GM12878 (cell line): ENCODE measurements at regions of chr14 and their contacts with region 1.

Region 1: DNA sequence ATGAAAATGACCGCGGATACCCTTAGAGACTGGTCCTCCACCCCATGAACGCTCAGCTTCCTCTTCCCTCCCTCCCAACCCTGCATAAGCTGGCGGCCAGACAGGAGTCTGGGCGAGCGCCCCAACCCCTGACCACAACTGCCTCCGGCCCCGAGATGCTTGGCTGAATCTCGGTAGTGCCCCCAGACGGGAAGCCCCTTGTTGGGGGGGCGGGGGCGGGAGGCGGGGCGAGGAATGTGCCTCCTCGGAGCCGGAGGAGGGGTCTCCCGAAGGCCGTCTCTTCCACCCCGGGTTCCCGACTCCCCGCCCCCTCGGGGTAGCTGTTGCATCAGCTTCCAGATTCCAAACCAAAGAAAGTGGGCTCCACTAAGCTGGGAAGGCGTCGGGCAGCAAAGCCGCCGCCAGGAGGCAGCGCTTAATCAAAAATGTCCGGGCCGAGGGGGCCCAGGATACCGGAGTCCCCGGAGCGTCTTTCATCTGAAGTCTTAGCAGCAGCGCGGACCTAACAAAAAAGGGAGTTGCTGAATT is 7.1 kb upstream of the MRPL52 start:
- DNase-seq: no peak
- ATAC-seq: peak; percentile 78
- H3K4me3 ChIP-seq: peak overlapping the region; percentile 74
- H3K27ac ChIP-seq: peak overlapping the region; percentile 48
- H3K4me1 ChIP-seq: peaks cover 34% of the 10 kb centered on the region
- H3K27me3 ChIP-seq: no peaks in the 10 kb centered on the region
- CTCF ChIP-seq: peak; percentile 73 to 77 (median 76)
- EP300 ChIP-seq: 0 out of 4 replicates have a peak, but pooled peaks of 1 of the 2 experiments have one; percentile 25
- POLR2A ChIP-seq: no peak; the same call in 1 of the 2 replicates
- RAD21 ChIP-seq: peak; percentile 86

Region 2: GRCh38 chr14:22766456-22767322 is 55.9 kb before region 1 on chr14 and contains the start of gene OXA1L:
- CTCF ChIA-PET with region 1: interaction called, 13 read pairs
- POLR2A ChIA-PET with region 1: no interaction called
- RAD21 ChIA-PET with region 1: interaction called, 9 read pairs
- SMC1A ChIA-PET with region 1: interaction called, 9 read pairs
- in situ Hi-C with region 1: no loop called
- intact Hi-C with region 1: no loop called
- DNase-seq: peak; percentile 92
- ATAC-seq: peak; percentile 89
- H3K4me3 ChIP-seq: peak within 1 kb of the TSS; percentile 91
- H3K27ac ChIP-seq: peak within 1 kb of the TSS; percentile 98
- H3K4me1 ChIP-seq: no peaks in the 10 kb centered on the region; the same call in 1 of the 2 replicates
- H3K27me3 ChIP-seq: no peaks in the 10 kb centered on the region
- CTCF ChIP-seq: no peak
- EP300 ChIP-seq: no peak
- POLR2A ChIP-seq: peak; percentile 92
- RAD21 ChIP-seq: no peak
- polyA plus RNA-seq, gene OXA1L: 110 to 116 TPM

Region 3: DNA sequence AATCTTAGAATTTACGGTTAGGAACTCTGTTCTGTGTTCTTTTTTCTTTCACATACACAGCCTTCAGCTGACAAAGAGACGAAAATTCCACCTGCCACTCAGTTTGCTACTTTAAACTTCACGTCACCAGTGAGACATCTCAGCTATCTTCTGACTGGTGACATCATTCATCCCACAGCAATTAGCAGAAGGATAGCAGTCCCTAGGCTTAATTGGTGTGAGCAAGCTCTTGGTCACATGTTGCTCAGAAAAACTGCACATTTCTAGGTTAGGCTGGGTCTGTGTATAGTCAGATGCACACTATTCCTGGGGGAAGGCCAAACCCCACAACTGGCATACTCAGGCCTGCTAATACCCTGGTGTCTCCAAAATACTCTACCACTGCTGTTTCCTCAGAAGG is 31.3 kb before region 1 on chr14:
- CTCF ChIA-PET with region 1: interaction called, 13 read pairs
- POLR2A ChIA-PET with region 1: interaction called, 7 read pairs
- RAD21 ChIA-PET with region 1: interaction called, 41 read pairs
- SMC1A ChIA-PET with region 1: interaction called, 14 read pairs
- in situ Hi-C with region 1: no loop called
- intact Hi-C with region 1: no loop called
- DNase-seq: no peak
- ATAC-seq: peak; percentile 20
- H3K4me3 ChIP-seq: no peak overlapping the region
- H3K27ac ChIP-seq: peak overlapping the region; percentile 71
- H3K4me1 ChIP-seq: peaks cover 46% of the 10 kb centered on the region
- H3K27me3 ChIP-seq: no peaks in the 10 kb centered on the region
- CTCF ChIP-seq: no peak
- EP300 ChIP-seq: no peak
- POLR2A ChIP-seq: no peak
- RAD21 ChIP-seq: no peak

Region 4: DNA sequence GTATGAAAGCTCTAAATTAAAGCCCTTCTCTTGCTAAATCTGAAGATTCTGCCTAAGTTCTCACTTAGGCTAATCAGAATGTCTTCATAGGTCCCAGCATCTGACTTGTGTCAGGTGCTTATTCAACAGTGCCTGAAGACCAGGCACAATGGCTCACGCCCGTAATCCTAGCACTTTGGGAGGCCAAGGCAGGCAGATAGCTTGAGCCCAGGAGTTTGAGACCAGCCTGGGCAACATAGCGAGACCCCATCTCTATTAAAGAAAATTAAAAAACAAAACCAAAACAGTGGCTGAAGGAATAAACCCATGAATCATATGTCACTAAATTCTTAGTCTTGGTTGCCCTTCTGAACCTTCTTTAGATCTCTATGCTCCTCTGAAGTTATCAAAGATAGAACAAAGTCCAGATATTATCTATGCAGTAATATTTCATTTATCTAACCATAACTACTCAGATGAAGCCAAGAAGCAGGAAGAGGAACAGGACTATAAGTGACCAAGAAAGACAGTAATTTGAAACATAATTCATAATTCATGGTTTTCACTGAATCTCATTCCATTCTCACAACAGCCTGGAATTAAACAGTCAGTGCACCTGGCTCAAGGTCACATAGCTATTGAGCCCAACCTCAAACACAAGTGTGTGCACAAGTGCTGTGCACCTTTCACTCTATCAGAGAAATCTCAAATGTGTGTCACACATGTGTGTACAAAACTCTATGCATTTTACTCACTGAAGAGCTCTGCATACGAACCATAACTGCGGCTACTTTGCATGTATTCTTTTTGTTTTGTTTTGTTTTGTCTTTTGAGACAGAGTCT is 14.0 kb before region 1 on chr14:
- CTCF ChIA-PET with region 1: interaction called, 36 read pairs
- POLR2A ChIA-PET with region 1: interaction called, 43 read pairs
- RAD21 ChIA-PET with region 1: interaction called, 30 read pairs
- SMC1A ChIA-PET with region 1: interaction called, 38 read pairs
- in situ Hi-C with region 1: no loop called
- intact Hi-C with region 1: loop called (anchors 1 kb)
- DNase-seq: no peak
- ATAC-seq: no peak
- H3K4me3 ChIP-seq: peak overlapping the region; percentile 13; the same call in 1 of the 2 replicates
- H3K27ac ChIP-seq: peak overlapping the region; percentile 30
- H3K4me1 ChIP-seq: peaks cover 43% of the 10 kb centered on the region
- H3K27me3 ChIP-seq: no peaks in the 10 kb centered on the region
- CTCF ChIP-seq: no peak
- EP300 ChIP-seq: no peak
- POLR2A ChIP-seq: no peak
- RAD21 ChIP-seq: no peak

Region 5: GRCh38 chr14:22886500-22887259 is 64.0 kb after region 1 on chr14:
- CTCF ChIA-PET with region 1: interaction called, 13 read pairs
- POLR2A ChIA-PET with region 1: no interaction called
- RAD21 ChIA-PET with region 1: interaction called, 4 read pairs
- SMC1A ChIA-PET with region 1: interaction called, 9 read pairs
- in situ Hi-C with region 1: no loop called
- intact Hi-C with region 1: no loop called
- DNase-seq: peak; percentile 45
- ATAC-seq: peak; percentile 72
- H3K4me3 ChIP-seq: peak overlapping the region; percentile 91
- H3K27ac ChIP-seq: peak overlapping the region; percentile 86
- H3K4me1 ChIP-seq: peaks cover 35% of the 10 kb centered on the region
- H3K27me3 ChIP-seq: no peaks in the 10 kb centered on the region
- CTCF ChIP-seq: peak; percentile 13 to 46 (median 18); a peak in 4 of 6 replicates
- EP300 ChIP-seq: no peak; a peak in 1 of 4 replicates
- POLR2A ChIP-seq: peak; percentile 79; the same call in 1 of the 2 replicates
- RAD21 ChIP-seq: no peak